ENCODE measurements at regions of chr6 and their contacts with region 1.

Region 1: DNA sequence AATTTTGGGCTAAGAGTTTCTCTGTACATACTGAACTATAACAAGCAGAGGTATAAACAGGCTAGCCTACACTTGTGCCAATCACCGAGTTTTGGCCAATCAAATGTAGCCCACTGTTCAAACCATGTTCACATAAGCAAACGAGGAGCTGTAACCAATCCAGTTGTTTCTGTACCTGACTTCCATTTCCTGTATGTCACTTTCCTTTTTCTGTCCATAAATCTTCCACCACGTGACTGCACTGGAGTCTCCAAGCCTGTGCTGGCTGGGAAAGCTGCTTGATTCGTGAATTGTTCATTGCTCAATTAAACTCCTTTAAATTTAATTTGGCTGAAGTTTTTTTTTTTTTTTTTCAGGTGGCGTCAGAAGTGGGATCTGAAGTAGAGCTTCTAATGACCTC is 332.9 kb downstream of the RNF144B start:
- DNase-seq: no peak
- ATAC-seq: no peak
- H3K4me3 ChIP-seq: no peak overlapping the region
- H3K27ac ChIP-seq: no peak overlapping the region
- H3K4me1 ChIP-seq: no peaks in the 10 kb centered on the region
- H3K27me3 ChIP-seq: peaks cover 26% of the 10 kb centered on the region; the same call in 1 of the 2 replicates
- CTCF ChIP-seq: no peak

Region 2: GRCh38 chr6:18656506-18656905 is 63.6 kb before region 1 on chr6:
- CTCF ChIA-PET with region 1: no interaction called
- POLR2A ChIA-PET with region 1: interaction called, 13 read pairs
- intact Hi-C with region 1: no loop called
- DNase-seq: no peak
- ATAC-seq: no peak
- H3K4me3 ChIP-seq: no peak overlapping the region
- H3K27ac ChIP-seq: no peak overlapping the region
- H3K4me1 ChIP-seq: no peaks in the 10 kb centered on the region
- H3K27me3 ChIP-seq: peaks cover 31% of the 10 kb centered on the region; the same call in 1 of the 2 replicates
- CTCF ChIP-seq: no peak

Region 3: GRCh38 chr6:18820725-18821124 is 100.7 kb after region 1 on chr6:
- CTCF ChIA-PET with region 1: no interaction called
- POLR2A ChIA-PET with region 1: no interaction called
- intact Hi-C with region 1: no loop called
- DNase-seq: no peak
- ATAC-seq: no peak
- H3K4me3 ChIP-seq: no peak overlapping the region
- H3K27ac ChIP-seq: no peak overlapping the region
- H3K4me1 ChIP-seq: no peaks in the 10 kb centered on the region
- H3K27me3 ChIP-seq: no peaks in the 10 kb centered on the region
- CTCF ChIP-seq: no peak

Region 4: DNA sequence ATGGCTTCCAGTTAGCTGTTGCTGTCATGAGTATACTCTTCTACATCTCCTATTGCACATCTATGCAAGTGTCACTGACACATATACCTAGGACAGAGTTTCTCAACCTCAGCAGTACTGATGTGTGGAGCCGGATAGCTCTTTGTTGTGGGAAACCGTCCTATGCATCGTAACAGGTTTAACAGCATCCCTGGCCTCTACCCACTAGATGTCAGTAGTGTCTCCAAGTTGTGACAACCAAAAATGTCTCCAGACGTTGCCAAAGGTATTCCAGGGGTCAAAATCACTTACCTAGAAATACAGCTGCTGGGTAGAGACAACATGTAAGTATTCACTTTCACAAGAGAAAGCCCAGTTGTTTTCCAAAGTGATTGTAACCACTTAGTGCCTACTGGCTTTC is 304.7 kb after region 1 on chr6:
- CTCF ChIA-PET with region 1: no interaction called
- POLR2A ChIA-PET with region 1: no interaction called
- intact Hi-C with region 1: no loop called
- DNase-seq: peak; percentile 81
- ATAC-seq: peak; percentile 91
- H3K4me3 ChIP-seq: no peak overlapping the region
- H3K27ac ChIP-seq: no peak overlapping the region
- H3K4me1 ChIP-seq: peaks cover 9% of the 10 kb centered on the region; the same call in 1 of the 2 replicates
- H3K27me3 ChIP-seq: no peaks in the 10 kb centered on the region
- CTCF ChIP-seq: peak; percentile 85

Measured in PC-3 (cell line).